ENCODE measurements at regions of chr9 and their contacts with region 1.

Region 1: GRCh38 chr9:105694190-105694847 is at the start of gene TMEM38B:
- DNase-seq: peak; percentile 88
- ATAC-seq: peak; percentile 85
- H3K4me3 Mint-ChIP-seq: peak within 1 kb of the TSS; percentile 76
- H3K27ac Mint-ChIP-seq: peak within 1 kb of the TSS; percentile 86
- H3K4me1 Mint-ChIP-seq: peaks cover 27% of the 10 kb centered on the region
- H3K27me3 Mint-ChIP-seq: peaks cover 15% of the 10 kb centered on the region
- total RNA-seq, gene TMEM38B: 14.5 to 24.8 TPM

Region 2: DNA sequence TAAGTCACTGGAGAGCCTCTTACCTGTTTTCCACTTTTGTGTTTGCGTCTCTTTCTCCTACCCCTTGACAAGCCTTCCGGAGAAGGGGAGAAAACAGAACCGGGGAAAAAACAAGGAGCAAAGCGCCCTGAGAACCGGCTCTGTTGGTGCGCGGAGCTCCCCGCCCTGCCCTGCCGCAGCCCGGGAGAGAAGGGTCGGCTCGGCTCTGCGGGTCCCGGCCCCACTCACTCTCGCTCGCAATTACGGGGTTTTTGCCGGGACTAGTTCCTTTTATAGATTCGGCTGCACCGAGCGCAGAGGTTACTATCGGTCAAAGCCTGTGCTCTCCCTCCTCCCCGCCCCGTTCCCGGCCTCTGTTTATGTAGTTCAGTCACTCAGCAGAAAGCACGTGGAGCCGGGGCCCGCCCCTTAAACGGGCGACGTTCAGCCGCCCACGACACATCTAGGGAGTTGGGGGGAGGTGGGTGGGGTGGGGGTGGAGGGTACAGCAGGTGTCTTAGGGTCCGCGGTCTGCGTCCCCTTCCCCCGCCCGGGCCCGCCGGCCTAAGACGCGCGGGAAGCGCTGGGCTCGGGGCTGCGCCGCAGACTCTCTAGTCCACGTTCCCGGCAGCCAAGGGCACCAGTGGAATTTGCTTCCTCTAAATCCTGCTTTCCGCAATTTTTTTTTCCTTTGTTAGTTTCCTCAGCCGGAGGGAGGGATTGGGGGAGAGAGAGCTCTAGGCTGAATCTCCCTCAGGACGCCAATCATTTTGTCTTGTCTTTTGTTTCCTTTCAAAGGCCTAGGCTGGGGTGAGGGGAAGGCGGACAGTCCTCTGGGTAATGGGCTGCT is 766.2 kb before region 1 on chr9 and contains the start of gene ABCA1:
- CTCF ChIA-PET with region 1: no interaction called
- POLR2A ChIA-PET with region 1: no interaction called
- intact Hi-C with region 1: loop called in 1 of 2 experiments (anchors 10 kb)
- DNase-seq: peak; percentile 90
- ATAC-seq: peak; percentile 71
- H3K4me3 Mint-ChIP-seq: peak within 1 kb of the TSS; percentile 79
- H3K27ac Mint-ChIP-seq: peak within 1 kb of the TSS; percentile 73
- H3K4me1 Mint-ChIP-seq: peaks cover 21% of the 10 kb centered on the region
- H3K27me3 Mint-ChIP-seq: peaks cover 5% of the 10 kb centered on the region
- total RNA-seq, gene ABCA1: 4.5 to 5.2 TPM

Region 3: GRCh38 chr9:105447814-105448812 is 246.2 kb before region 1 on chr9 and contains the start of gene FSD1L:
- CTCF ChIA-PET with region 1: interaction called, 5 read pairs
- POLR2A ChIA-PET with region 1: interaction called, 3 read pairs
- intact Hi-C with region 1: loop called (anchors 1 to 10 kb)
- DNase-seq: peak; percentile 91
- ATAC-seq: peak; percentile 96
- H3K4me3 Mint-ChIP-seq: peak within 1 kb of the TSS; percentile 78
- H3K27ac Mint-ChIP-seq: peak within 1 kb of the TSS; percentile 44
- H3K4me1 Mint-ChIP-seq: peaks cover 9% of the 10 kb centered on the region
- H3K27me3 Mint-ChIP-seq: no peaks in the 10 kb centered on the region
- total RNA-seq, gene FSD1L: 2.4 to 3.0 TPM

Region 4: DNA sequence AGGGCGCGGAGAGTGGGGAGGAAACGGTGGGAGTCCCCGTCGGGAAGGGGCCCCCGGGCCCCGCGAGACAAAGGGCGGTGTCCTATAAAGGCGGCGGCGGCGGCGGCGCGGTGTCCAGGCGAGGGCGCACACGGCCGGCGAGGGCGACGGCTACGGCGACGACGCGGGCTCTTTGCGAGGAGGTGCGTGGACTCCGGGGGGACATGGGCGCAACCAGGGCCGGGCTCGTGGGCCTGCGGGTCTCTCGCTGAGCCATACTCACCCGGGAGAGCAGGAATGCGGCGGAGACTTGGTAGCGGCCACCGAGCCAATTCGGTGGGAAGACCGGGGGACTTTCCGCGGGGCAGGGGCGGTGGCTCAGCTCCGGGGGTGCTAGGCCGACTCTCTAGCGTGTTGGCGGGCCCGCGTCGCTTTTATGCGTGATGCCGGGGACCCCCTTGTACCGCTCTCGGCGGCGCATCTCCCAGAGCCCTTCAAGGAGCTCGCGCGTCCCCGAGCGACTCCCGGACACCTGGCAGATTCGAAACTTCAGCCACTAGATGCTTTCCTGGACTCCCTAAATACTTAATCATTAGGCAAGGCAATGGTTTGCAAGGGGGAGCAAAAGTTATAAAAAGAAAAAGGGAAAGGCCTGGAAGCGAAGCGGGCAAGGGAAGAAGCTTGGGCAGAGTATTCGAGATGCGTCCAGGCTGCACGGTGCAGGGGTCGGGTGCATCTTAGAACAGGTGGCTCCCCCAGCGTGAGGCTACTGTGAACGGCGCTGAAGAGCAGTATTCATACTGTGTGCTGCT is 38.0 kb before region 1 on chr9:
- CTCF ChIA-PET with region 1: no interaction called
- POLR2A ChIA-PET with region 1: interaction called, 3 read pairs
- intact Hi-C with region 1: loop called in 1 of 2 experiments (anchors 2 kb)
- DNase-seq: peak; percentile 44
- ATAC-seq: peak; percentile 70
- H3K4me3 Mint-ChIP-seq: peak overlapping the region; percentile 52
- H3K27ac Mint-ChIP-seq: no peak overlapping the region
- H3K4me1 Mint-ChIP-seq: peaks cover 6% of the 10 kb centered on the region
- H3K27me3 Mint-ChIP-seq: peaks cover 28% of the 10 kb centered on the region

Measured in activated CD4-positive, alpha-beta T cell treated with anti-CD3 and anti-CD28 coated beads for 36 hours (primary cell).